Endothelial cell of umbilical vein (primary cell): ENCODE measurements at regions of chr7 and their contacts with region 1.

Region 1: GRCh38 chr7:91034459-91035368 is 229.5 kb upstream of the FZD1 start:
- DNase-seq: peak; percentile 56
- H3K4me3 ChIP-seq: no peak overlapping the region
- H3K27ac ChIP-seq: no peak overlapping the region
- H3K4me1 ChIP-seq: no peaks in the 10 kb centered on the region
- H3K27me3 ChIP-seq: no peaks in the 10 kb centered on the region
- CTCF ChIP-seq: peak; percentile 35 to 61
- POLR2A ChIP-seq: no peak

Region 2: GRCh38 chr7:90552521-90552920 is 482.2 kb before region 1 on chr7:
- CTCF ChIA-PET with region 1: interaction called, 47 read pairs
- POLR2A ChIA-PET with region 1: no interaction called
- dilution Hi-C with region 1: no loop called
- intact Hi-C with region 1: loop called (anchors 1 kb)
- DNase-seq: peak; percentile 46
- H3K4me3 ChIP-seq: no peak overlapping the region
- H3K27ac ChIP-seq: no peak overlapping the region
- H3K4me1 ChIP-seq: no peaks in the 10 kb centered on the region
- H3K27me3 ChIP-seq: peaks cover 0 to 5% of the 10 kb centered on the region in 2 experiments
- CTCF ChIP-seq: peak in 1 of 2 donors; percentile 3
- POLR2A ChIP-seq: no peak

Region 3: DNA sequence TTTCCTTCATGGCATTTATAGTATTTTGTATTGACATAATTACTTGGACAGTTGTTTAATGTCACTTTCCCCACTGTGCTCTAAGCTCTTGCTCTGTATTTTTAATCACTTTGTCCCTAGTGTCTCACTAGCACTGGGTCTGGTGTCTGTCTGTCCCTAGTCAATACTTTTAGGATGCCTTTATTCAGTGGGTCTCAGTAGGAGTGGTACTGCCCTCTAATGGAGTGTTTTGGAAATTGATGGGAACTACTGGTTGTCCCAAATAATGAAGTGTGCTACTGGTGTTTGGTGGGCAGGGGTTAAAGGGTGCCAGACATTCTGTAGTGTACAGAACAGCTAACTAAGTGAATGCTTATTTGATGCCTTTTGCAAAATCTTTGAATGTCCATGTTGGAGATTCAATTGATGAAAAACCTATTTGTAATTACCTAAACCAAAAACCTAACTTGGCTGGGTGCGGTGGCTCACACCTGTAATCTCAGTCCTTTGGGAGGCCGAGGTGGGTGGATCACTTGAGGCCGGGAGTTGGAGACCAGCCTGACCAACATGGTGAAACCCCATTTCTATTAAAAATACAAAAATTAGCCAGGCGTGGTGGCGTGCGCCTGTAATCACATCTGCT is 405.3 kb before region 1 on chr7:
- CTCF ChIA-PET with region 1: interaction called, 23 read pairs
- POLR2A ChIA-PET with region 1: no interaction called
- dilution Hi-C with region 1: no loop called
- intact Hi-C with region 1: loop called (anchors 1 kb)
- DNase-seq: peak; percentile 75
- H3K4me3 ChIP-seq: no peak overlapping the region
- H3K27ac ChIP-seq: no peak overlapping the region
- H3K4me1 ChIP-seq: peaks cover 18% of the 10 kb centered on the region
- H3K27me3 ChIP-seq: no peaks in the 10 kb centered on the region
- CTCF ChIP-seq: peak; percentile 56 to 60
- POLR2A ChIP-seq: no peak

Region 4: GRCh38 chr7:90708841-90709317 is 325.8 kb before region 1 on chr7:
- CTCF ChIA-PET with region 1: interaction called, 27 read pairs
- POLR2A ChIA-PET with region 1: no interaction called
- dilution Hi-C with region 1: no loop called
- intact Hi-C with region 1: loop called (anchors 1 kb)
- DNase-seq: peak; percentile 23
- H3K4me3 ChIP-seq: no peak overlapping the region
- H3K27ac ChIP-seq: no peak overlapping the region
- H3K4me1 ChIP-seq: peaks cover 12% of the 10 kb centered on the region
- H3K27me3 ChIP-seq: no peaks in the 10 kb centered on the region
- CTCF ChIP-seq: peak; percentile 60 to 61
- POLR2A ChIP-seq: no peak

Region 5: GRCh38 chr7:90749262-90749661 is 285.5 kb before region 1 on chr7:
- CTCF ChIA-PET with region 1: interaction called, 7 read pairs
- POLR2A ChIA-PET with region 1: no interaction called
- dilution Hi-C with region 1: no loop called
- intact Hi-C with region 1: loop called (anchors 1 kb)
- DNase-seq: no peak
- H3K4me3 ChIP-seq: no peak overlapping the region
- H3K27ac ChIP-seq: no peak overlapping the region
- H3K4me1 ChIP-seq: peaks cover 5% of the 10 kb centered on the region
- H3K27me3 ChIP-seq: no peaks in the 10 kb centered on the region
- CTCF ChIP-seq: no peak
- POLR2A ChIP-seq: no peak

Region 6: DNA sequence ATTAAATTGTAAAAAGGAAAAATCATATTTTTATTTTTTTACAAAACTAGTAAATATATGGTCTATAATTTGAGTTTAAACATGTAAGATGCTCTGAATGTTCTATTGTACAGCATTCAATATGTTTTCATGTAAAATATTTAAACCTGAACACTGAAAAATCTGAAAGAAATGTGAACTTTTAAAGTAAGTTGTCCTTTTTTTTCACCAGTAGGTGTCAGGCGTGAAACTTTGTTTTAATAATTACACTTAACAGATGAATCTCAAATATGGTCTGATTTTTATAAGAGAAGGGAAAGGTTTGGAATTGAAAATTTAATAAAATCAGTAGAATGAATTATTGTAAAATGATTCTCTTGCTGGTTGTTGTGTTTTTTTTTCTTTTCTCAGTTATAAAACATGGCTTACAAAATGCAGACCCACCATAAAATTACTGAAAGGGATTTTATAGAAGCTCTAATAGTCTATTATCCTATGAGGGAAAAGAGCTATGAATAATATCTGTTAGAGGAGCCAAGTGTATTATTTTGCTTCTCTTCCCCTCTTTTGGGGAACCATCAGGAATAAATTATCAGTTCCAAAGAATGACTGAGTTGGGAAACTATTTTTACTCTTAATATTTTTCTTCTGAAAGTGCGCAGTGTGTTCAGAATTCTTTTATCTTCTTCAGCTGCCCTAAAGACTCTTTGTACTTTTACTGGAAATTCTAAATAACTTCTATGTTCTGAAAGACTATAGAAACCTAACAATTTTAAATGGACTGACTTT is 11.8 kb after region 1 on chr7:
- CTCF ChIA-PET with region 1: interaction called, 10 read pairs
- POLR2A ChIA-PET with region 1: no interaction called
- dilution Hi-C with region 1: no loop called
- intact Hi-C with region 1: no loop called
- DNase-seq: peak; percentile 21
- H3K4me3 ChIP-seq: no peak overlapping the region
- H3K27ac ChIP-seq: no peak overlapping the region
- H3K4me1 ChIP-seq: no peaks in the 10 kb centered on the region
- H3K27me3 ChIP-seq: no peaks in the 10 kb centered on the region
- CTCF ChIP-seq: peak in 1 of 2 donors; percentile 13
- POLR2A ChIP-seq: no peak

Region 7: DNA sequence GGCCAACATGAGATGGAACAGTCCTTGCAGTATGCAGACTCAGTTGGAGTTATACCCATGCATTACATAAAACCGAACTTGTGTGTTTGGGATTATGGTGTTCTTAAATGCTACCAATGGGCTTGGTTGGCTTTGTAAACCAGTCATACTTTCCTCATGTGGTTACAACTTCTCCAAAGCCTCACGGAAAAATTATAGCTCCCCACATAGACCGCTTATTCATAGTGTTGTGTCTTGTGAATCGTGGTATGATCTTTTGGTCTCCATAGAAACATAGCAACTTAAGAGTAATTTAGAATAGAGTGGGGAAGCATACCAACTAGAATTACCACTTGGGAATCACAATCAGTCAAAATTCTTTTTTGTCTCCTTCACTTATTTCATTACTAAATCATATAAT is 117.2 kb after region 1 on chr7:
- CTCF ChIA-PET with region 1: no interaction called
- POLR2A ChIA-PET with region 1: no interaction called
- dilution Hi-C with region 1: no loop called
- intact Hi-C with region 1: no loop called
- DNase-seq: no peak
- H3K4me3 ChIP-seq: no peak overlapping the region
- H3K27ac ChIP-seq: no peak overlapping the region
- H3K4me1 ChIP-seq: no peaks in the 10 kb centered on the region
- H3K27me3 ChIP-seq: no peaks in the 10 kb centered on the region
- CTCF ChIP-seq: no peak
- POLR2A ChIP-seq: no peak